ENCODE measurements at regions of chr19 and their contacts with region 1.

Region 1: DNA sequence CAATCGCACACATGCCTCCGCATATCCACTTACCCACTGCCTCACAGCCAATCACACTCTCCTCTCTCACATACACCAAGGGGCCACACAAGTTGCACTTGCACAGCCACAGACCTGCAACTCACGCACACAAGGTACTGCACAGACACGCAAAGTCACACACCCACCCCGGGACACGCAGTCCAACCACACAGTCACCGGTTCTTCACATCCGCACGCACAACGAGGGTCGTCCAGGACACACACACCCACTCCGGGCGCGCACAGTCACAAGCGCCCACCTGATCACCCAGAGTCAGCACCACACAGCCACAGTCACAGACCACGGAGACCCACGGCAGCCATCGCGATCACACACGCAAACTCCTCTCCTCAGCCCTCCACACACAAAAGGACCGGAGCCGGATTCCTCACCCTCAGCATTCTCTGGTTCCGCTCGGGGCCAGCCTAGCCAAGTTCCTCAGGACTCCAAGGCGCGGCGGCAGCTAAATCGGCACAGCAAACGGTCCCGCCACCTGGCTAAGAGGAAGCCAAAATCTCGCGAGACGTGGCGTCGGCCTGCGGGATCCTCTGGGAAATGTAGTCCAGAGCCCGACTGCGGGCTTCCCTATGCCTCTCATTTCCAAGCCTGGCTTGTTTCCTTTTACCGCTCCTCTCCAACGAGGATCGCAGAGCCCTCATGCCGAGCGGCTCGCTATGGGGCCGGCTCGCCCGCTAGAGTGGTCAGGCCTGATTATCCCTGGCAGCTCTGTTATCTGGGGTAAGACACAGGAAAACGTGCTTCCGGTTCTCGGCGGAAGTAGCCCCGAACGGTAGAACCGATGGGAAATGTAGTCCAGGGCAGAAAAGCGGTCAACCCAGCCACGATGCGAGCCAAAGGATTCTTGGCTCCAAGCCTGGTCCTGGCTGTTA is at the start of gene ZNF850:
- DNase-seq: peak; percentile 91
- H3K4me3 Mint-ChIP-seq: peak within 1 kb of the TSS; percentile 95
- H3K27ac Mint-ChIP-seq: peak within 1 kb of the TSS; percentile 90
- H3K4me1 Mint-ChIP-seq: peaks cover 20% of the 10 kb centered on the region
- H3K27me3 Mint-ChIP-seq: no peaks in the 10 kb centered on the region
- total RNA-seq, gene ZNF850: 3.3 and 4.7 TPM in 2 replicates

Region 2: GRCh38 chr19:36378625-36379509 is 393.7 kb before region 1 on chr19 and contains the start of gene ZFP14:
- intact Hi-C with region 1: loop called (anchors 1 kb)
- DNase-seq: peak; percentile 91
- H3K4me3 Mint-ChIP-seq: peak within 1 kb of the TSS; percentile 85
- H3K27ac Mint-ChIP-seq: peak within 1 kb of the TSS; percentile 86
- H3K4me1 Mint-ChIP-seq: peaks cover 12% of the 10 kb centered on the region
- H3K27me3 Mint-ChIP-seq: no peaks in the 10 kb centered on the region
- total RNA-seq, gene ZFP14: 2.0 and 2.4 TPM in 2 replicates

Region 3: DNA sequence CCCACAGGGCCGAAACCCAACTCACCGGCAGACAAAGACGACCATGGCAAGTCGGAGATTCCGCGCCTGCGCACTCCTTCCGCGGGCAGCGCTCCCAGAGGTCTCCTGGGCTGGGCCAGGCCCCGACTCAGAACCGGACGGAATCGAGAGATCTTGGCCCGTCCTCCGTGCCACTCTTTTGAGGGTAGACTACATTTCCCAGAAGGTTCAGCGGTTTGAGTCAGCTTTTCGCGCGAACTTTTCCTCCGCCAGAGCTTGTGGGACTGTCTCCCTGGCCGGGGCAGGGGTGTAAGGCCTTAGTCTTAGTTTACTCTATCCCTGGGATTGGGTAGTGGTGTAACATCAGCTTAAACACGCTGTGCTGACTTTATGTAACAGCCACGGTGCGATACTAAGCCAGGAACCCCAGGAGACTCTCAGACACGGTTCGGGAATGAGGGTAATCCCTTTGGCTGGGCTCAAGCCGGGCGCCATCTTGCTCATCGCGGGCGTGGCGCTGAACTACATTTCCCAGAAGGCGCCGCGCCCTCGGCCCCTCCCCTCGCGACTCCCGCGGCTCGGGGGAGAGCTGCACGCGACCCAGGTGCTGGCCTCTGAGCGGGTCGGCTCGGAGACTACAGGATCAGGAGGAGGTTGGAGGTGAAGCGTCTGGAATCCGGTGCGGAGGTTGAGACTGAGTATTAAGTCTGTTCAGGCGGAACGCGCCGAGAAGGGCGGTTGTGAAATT is 244.2 kb before region 1 on chr19 and contains the start of gene ZNF260:
- intact Hi-C with region 1: loop called (anchors 1 kb)
- DNase-seq: peak; percentile 87
- H3K4me3 Mint-ChIP-seq: peak within 1 kb of the TSS; percentile 96
- H3K27ac Mint-ChIP-seq: peak within 1 kb of the TSS; percentile 94
- H3K4me1 Mint-ChIP-seq: peaks cover 17% of the 10 kb centered on the region
- H3K27me3 Mint-ChIP-seq: no peaks in the 10 kb centered on the region
- total RNA-seq, gene ZNF260: 6.2 and 7.1 TPM in 2 replicates

Region 4: GRCh38 chr19:36837906-36838783 is 65.6 kb after region 1 on chr19 and contains the start of gene ZNF790:
- intact Hi-C with region 1: loop called (anchors 5 kb)
- DNase-seq: peak; percentile 77
- H3K4me3 Mint-ChIP-seq: no peak within 1 kb of the TSS
- H3K27ac Mint-ChIP-seq: no peak within 1 kb of the TSS
- H3K4me1 Mint-ChIP-seq: peaks cover 2% of the 10 kb centered on the region
- H3K27me3 Mint-ChIP-seq: no peaks in the 10 kb centered on the region
- total RNA-seq, gene ZNF790: 4.6 TPM in 2 replicates

Region 5: GRCh38 chr19:36915992-36916830 is 143.6 kb after region 1 on chr19 and contains the starts of genes ZNF568 and ZNF829:
- intact Hi-C with region 1: loop called (anchors 5 kb)
- DNase-seq: peak; percentile 92
- H3K4me3 Mint-ChIP-seq: peak within 1 kb of the TSS; percentile 90
- H3K27ac Mint-ChIP-seq: peak within 1 kb of the TSS; percentile 93
- H3K4me1 Mint-ChIP-seq: peaks cover 20% of the 10 kb centered on the region
- H3K27me3 Mint-ChIP-seq: no peaks in the 10 kb centered on the region
- total RNA-seq, gene ZNF568: 4.5 and 6.3 TPM in 2 replicates
- total RNA-seq, gene ZNF829: 3.4 and 3.5 TPM in 2 replicates

Region 6: GRCh38 chr19:37370880-37371661 is 598.5 kb after region 1 on chr19 and contains the start of gene ZNF527:
- intact Hi-C with region 1: loop called (anchors 5 kb)
- DNase-seq: peak; percentile 96
- H3K4me3 Mint-ChIP-seq: peak within 1 kb of the TSS; percentile 90
- H3K27ac Mint-ChIP-seq: peak within 1 kb of the TSS; percentile 79
- H3K4me1 Mint-ChIP-seq: peaks cover 11% of the 10 kb centered on the region
- H3K27me3 Mint-ChIP-seq: no peaks in the 10 kb centered on the region
- total RNA-seq, gene ZNF527: 3.2 TPM in 2 replicates

Measured in activated T-helper 2 cell treated with anti-CD3 and anti-CD28 coated beads, Interferon-gamma antibody, Interleukin-2, Interleukin-4, amounts not matched to agents 10 μg/mL and 5 μg/mL and 100 μg/mL, durations not matched to agents 14 hours and 24 hours and 36 hours (primary cell).